Common myeloid progenitor, CD34-positive (primary cell): ENCODE measurements at regions of chr17 and their contacts with region 1.

Region 1: GRCh38 chr17:58527306-58527705 is 12.9 kb upstream of the MTMR4 start:
- DNase-seq: peak in 2 of 3 donors; percentile 43 to 46
- H3K4me3 ChIP-seq: no peak overlapping the region
- H3K27ac ChIP-seq: no peak overlapping the region
- H3K4me1 ChIP-seq: peaks cover 0 to 18% (median 13%) of the 10 kb centered on the region in 4 experiments
- H3K27me3 ChIP-seq: peaks cover 0 to 26% (median 17%) of the 10 kb centered on the region in 5 experiments

Region 2: DNA sequence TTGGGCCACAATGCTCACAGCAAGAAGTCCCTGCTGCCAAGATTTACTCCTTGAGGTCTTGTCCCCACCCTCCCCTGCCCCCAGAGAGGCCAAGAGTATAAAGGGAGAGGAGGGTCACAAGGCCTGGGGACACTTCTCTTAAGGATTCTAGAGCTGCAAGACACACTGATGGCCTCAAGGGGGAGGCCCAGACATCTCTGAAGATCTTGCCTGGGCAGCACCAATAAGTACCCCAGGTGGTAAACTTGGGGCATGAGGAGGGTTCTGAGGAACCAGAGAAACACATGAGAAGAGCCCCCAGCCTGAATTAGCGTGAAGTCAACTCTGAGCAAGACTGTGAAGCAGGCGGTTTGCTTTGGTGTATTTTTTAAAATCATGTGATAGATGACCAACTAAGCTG is 13.9 kb after region 1 on chr17:
- CTCF ChIA-PET with region 1: interaction called, 10 read pairs
- POLR2A ChIA-PET with region 1: no interaction called
- DNase-seq: peak; percentile 42 to 60 (median 55)
- H3K4me3 ChIP-seq: no peak overlapping the region
- H3K27ac ChIP-seq: no peak overlapping the region
- H3K4me1 ChIP-seq: peaks cover 0 to 8% (median 3%) of the 10 kb centered on the region in 4 experiments
- H3K27me3 ChIP-seq: peaks cover 0 to 2% (median 0%) of the 10 kb centered on the region in 5 experiments